ENCODE measurements at regions of chr13 and their contacts with region 1.

Region 1: DNA sequence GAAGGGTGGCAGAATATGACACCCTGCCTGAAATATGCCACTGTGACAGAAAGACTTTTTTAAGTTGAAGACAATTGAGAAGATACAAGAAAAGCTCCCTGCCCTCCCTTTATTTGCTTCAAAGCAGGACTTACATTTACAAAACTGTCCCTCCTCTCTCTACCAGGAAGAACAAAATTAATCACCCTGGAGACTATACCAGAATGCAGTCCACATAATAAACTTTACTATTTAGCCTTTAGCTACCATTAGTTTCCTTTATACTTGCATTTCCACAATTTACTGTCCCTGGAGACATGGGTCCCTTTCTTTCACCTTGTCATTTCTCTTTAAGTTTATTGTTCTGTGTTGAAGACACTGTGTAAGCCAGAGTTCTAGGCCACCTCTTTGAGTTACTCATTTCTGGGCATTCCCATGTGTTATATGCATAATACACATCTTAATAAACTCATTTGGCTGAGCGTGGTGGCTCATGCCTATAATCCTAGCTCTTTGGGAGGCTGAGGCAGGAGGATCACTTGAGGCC is 238.8 kb downstream of the RFC3 start:
- DNase-seq: no peak
- H3K4me3 ChIP-seq: no peak overlapping the region
- H3K27ac ChIP-seq: no peak overlapping the region
- H3K4me1 ChIP-seq: peaks cover 7% of the 10 kb centered on the region
- CTCF ChIP-seq: no peak

Region 2: DNA sequence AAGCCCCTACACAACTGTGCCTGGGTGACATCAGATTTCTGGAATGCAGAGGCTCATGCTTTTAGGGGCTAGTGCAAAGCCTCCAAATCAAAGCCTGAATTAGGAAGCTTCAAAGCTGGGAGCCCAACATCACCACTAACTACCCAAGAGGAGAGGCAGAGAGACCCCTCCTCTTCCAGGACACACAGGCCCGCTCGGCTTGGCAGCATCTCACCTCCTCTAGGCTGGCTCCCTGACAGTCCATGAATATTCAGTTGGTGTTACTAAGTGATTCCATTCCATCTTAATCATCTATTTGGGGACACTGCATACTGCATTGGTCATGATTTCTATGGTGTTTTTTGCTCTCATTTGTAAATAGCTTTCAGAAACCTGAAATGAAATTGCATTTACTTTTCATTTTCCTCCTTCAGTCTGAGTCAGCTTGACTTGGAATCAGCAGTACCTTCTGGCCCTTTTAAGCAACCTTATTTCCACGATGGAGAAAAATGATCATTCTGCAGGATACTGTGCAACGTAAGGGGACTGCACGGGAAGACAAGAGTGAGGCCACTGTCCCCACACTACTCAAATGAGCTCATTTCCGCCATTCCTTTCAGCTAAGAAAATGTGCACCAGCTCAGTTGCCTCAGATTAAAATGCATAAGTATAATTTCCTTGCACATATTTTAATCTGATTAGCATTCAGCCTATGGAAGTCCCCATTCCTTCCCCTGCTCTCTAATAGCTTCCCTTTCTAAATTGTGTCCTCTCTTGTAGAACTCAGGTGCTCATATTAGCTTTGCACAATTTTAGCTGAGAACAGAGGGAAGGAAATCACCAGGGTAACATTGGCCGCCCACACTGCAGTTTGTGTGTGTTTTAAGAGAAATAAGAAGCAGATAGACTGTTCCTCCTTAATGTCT is 18.9 kb before region 1 on chr13:
- CTCF ChIA-PET with region 1: no interaction called
- POLR2A ChIA-PET with region 1: interaction called, 11 read pairs
- intact Hi-C with region 1: no loop called
- DNase-seq: peak; percentile 47
- H3K4me3 ChIP-seq: peak overlapping the region; percentile 30
- H3K27ac ChIP-seq: peak overlapping the region; percentile 56
- H3K4me1 ChIP-seq: peaks cover 28% of the 10 kb centered on the region
- CTCF ChIP-seq: no peak

Region 3: GRCh38 chr13:34751492-34751891 is 694.7 kb after region 1 on chr13:
- CTCF ChIA-PET with region 1: no interaction called
- POLR2A ChIA-PET with region 1: no interaction called
- intact Hi-C with region 1: no loop called
- DNase-seq: no peak
- H3K4me3 ChIP-seq: no peak overlapping the region
- H3K27ac ChIP-seq: no peak overlapping the region
- H3K4me1 ChIP-seq: no peaks in the 10 kb centered on the region
- CTCF ChIP-seq: no peak

Region 4: GRCh38 chr13:34793301-34793700 is 736.5 kb after region 1 on chr13:
- CTCF ChIA-PET with region 1: no interaction called
- POLR2A ChIA-PET with region 1: no interaction called
- intact Hi-C with region 1: no loop called
- DNase-seq: no peak
- H3K4me3 ChIP-seq: no peak overlapping the region
- H3K27ac ChIP-seq: no peak overlapping the region
- H3K4me1 ChIP-seq: no peaks in the 10 kb centered on the region
- CTCF ChIP-seq: no peak

Measured in OCI-LY7 (cell line).